B cell (primary cell): ENCODE measurements at regions of chr6 and their contacts with region 1.

Region 1: DNA sequence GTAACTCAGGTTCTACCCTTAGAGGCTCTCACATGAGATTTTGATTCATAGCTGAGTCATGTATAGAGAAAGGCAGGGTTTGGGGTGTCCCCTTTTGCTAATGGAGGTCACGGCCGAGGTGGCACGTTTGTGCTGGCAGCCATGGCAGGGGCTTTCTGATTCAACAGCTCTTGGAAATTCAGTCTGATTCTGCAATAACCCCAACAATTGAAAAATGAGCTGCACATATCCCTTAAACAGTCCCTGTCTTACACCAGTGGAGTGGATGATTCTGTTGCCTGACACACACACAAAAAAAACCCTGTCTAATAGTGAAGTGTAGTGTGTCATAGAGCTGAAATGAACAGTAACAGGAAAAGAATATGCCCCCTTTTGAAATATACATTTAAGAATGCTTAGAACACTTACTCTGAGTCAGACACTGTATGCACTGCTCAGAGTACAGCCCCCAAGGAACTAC is 40.4 kb upstream of the ARG1 start:
- DNase-seq: no peak
- ATAC-seq: no peak
- H3K4me3 ChIP-seq: no peak overlapping the region
- H3K4me3 Mint-ChIP-seq: no peak overlapping the region
- H3K27ac ChIP-seq: no peak overlapping the region
- H3K27ac Mint-ChIP-seq: no peak overlapping the region
- H3K4me1 ChIP-seq: peaks cover 3% of the 10 kb centered on the region in 2 donors
- H3K4me1 Mint-ChIP-seq: peaks cover 5% of the 10 kb centered on the region
- H3K27me3 ChIP-seq: peaks cover 0 to 4% (median 0%) of the 10 kb centered on the region in 4 experiments
- H3K27me3 Mint-ChIP-seq: peaks cover 11% of the 10 kb centered on the region
- CTCF ChIP-seq: no peak

Region 2: GRCh38 chr6:131129689-131130545 is 402.7 kb before region 1 on chr6:
- CTCF ChIA-PET with region 1: no interaction called
- POLR2A ChIA-PET with region 1: no interaction called
- intact Hi-C with region 1: loop called (anchors 5 kb)
- DNase-seq: no peak
- ATAC-seq: no peak
- H3K4me3 ChIP-seq: no peak overlapping the region
- H3K4me3 Mint-ChIP-seq: no peak overlapping the region
- H3K27ac ChIP-seq: no peak overlapping the region
- H3K27ac Mint-ChIP-seq: no peak overlapping the region
- H3K4me1 ChIP-seq: peaks cover 4 to 5% of the 10 kb centered on the region in 2 donors
- H3K4me1 Mint-ChIP-seq: peaks cover 3% of the 10 kb centered on the region
- H3K27me3 ChIP-seq: no peaks in the 10 kb centered on the region
- H3K27me3 Mint-ChIP-seq: peaks cover 8% of the 10 kb centered on the region
- CTCF ChIP-seq: no peak

Region 3: DNA sequence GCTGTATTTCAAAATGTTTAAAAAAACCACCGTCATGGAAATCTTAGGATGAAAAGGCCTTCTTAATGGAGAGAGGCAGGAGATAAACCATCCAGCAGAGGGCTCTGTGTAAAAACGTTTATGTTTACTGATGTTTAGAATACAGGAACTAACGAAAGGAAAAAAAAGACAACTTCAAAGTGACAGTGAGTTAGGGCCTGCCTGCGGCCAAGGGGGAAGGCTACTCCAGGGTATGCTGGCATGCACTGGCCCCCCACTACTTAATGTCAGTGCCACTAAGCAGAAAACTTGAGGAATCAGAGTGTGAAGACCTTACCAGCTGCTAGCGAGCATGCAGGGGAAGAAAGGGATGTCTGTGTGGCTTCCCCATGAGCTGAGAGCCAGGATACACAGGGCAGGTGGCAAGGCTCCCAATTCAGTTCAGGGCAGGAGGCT is 349.6 kb before region 1 on chr6:
- CTCF ChIA-PET with region 1: interaction called, 66 read pairs
- POLR2A ChIA-PET with region 1: no interaction called
- intact Hi-C with region 1: loop called (anchors 1 kb)
- DNase-seq: peak; percentile 56
- ATAC-seq: peak; percentile 36
- H3K4me3 ChIP-seq: peak overlapping the region in 2 of 5 experiments; percentile 28 to 41
- H3K4me3 Mint-ChIP-seq: peak overlapping the region; percentile 33
- H3K27ac ChIP-seq: no peak overlapping the region
- H3K27ac Mint-ChIP-seq: peak overlapping the region; percentile 71
- H3K4me1 ChIP-seq: peaks cover 4 to 5% of the 10 kb centered on the region in 2 donors
- H3K4me1 Mint-ChIP-seq: peaks cover 5% of the 10 kb centered on the region
- H3K27me3 ChIP-seq: no peaks in the 10 kb centered on the region
- H3K27me3 Mint-ChIP-seq: no peaks in the 10 kb centered on the region
- CTCF ChIP-seq: peak; percentile 52

Region 4: DNA sequence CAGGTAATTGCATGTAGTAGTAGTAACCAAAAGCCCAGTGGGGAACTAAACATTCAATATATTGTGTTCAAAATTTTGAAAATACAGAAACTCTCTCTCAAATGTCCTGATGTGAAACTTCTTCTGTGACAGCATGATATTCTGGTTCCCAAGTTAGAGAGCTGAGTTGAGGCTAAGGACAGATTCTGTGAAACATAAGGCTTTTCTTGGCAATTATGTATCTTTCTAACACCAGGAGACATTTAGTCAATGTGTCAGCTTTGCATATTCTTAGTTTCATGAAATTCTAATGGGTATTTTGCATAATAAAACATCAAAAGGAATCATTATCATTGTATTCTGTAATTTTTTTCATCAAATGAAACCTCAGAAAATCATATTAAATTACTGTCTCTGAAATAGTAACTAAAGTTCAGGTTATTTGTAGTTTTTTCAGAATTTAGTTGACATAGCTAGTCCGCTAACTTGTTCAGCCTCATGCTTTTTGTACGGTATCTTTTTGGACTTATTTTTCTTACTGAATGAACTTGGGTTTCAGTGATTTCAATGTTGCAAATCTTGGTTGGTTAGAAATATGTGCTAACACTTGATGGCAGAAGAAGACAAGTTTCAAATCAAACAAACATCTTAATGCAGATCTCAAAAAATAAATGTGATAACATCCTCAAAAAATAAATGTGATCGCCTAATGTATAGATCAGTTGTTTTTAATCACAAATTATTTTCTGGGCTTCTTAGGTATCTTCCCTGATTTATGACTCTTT is 326.9 kb before region 1 on chr6:
- CTCF ChIA-PET with region 1: interaction called, 86 read pairs
- POLR2A ChIA-PET with region 1: no interaction called
- intact Hi-C with region 1: no loop called
- DNase-seq: no peak
- ATAC-seq: no peak
- H3K4me3 ChIP-seq: no peak overlapping the region
- H3K4me3 Mint-ChIP-seq: no peak overlapping the region
- H3K27ac ChIP-seq: no peak overlapping the region
- H3K27ac Mint-ChIP-seq: no peak overlapping the region
- H3K4me1 ChIP-seq: peaks cover 0 to 8% of the 10 kb centered on the region in 2 donors
- H3K4me1 Mint-ChIP-seq: peaks cover 12% of the 10 kb centered on the region
- H3K27me3 ChIP-seq: no peaks in the 10 kb centered on the region
- H3K27me3 Mint-ChIP-seq: no peaks in the 10 kb centered on the region
- CTCF ChIP-seq: no peak

Region 5: DNA sequence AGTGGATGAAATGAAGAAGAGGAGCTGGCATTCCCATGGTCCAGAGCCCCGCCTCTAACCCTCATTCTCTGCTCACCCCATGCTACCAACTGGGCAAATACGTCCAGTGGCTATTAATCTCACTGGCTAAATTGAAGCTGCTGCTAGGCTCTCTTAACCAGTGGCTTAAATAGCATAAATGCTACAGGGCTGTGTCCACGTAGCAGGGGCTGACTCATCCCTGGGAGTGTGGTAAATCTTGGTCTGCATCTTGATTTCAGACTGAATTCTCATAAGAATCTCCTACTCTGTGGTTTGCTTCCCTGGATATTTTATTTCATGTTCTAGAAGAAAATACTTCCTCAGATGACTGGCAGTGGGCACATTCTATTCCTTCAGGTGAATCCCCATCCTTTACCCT is 152.7 kb before region 1 on chr6:
- CTCF ChIA-PET with region 1: no interaction called
- POLR2A ChIA-PET with region 1: no interaction called
- intact Hi-C with region 1: no loop called
- DNase-seq: no peak
- ATAC-seq: no peak
- H3K4me3 ChIP-seq: no peak overlapping the region
- H3K4me3 Mint-ChIP-seq: no peak overlapping the region
- H3K27ac ChIP-seq: no peak overlapping the region
- H3K27ac Mint-ChIP-seq: no peak overlapping the region
- H3K4me1 ChIP-seq: peaks cover 15 to 17% of the 10 kb centered on the region in 2 donors
- H3K4me1 Mint-ChIP-seq: peaks cover 18% of the 10 kb centered on the region
- H3K27me3 ChIP-seq: no peaks in the 10 kb centered on the region
- H3K27me3 Mint-ChIP-seq: peaks cover 6% of the 10 kb centered on the region
- CTCF ChIP-seq: no peak

Region 6: DNA sequence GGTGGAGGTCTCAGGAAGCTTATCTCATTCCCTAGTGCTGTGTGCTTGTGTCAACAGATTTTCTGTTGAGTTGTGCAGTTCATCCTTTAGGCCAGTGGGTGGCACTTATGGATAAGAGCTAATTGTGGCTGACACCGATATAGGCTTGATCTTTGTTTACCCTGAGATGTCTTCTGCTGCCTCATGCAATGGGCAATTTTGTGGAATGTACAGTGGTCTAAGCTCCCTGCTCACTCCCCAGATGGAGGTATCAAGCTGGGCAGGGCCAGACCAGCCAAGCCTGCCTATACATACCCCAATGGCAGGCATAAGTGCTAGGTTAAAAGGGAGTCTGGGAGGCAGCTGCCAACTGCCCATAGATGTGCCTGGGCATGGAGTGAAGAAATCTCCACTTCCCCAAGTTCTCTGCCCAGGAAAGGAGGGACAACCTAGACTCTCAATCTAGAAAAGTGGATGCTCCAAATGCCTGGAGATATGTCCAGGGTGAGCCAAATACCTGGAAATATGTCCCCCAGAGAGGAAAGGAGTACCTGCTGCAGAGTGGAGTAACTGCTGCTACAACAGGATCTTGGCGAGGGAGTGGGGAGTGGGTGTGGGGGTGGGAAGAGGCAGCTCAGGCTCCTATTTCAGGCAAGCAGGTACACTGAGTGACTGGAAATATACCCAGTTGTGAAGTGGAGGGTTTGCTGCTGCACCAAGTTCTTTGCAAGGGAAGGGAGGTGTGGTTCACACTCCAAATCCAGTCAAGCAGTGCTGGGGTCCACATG is 12.8 kb before region 1 on chr6:
- CTCF ChIA-PET with region 1: interaction called, 10 read pairs
- POLR2A ChIA-PET with region 1: no interaction called
- intact Hi-C with region 1: no loop called
- DNase-seq: peak; percentile 38
- ATAC-seq: peak; percentile 57
- H3K4me3 ChIP-seq: no peak overlapping the region
- H3K4me3 Mint-ChIP-seq: no peak overlapping the region
- H3K27ac ChIP-seq: no peak overlapping the region
- H3K27ac Mint-ChIP-seq: no peak overlapping the region
- H3K4me1 ChIP-seq: no peaks in the 10 kb centered on the region
- H3K4me1 Mint-ChIP-seq: no peaks in the 10 kb centered on the region
- H3K27me3 ChIP-seq: peaks cover 0 to 3% (median 1%) of the 10 kb centered on the region in 4 experiments
- H3K27me3 Mint-ChIP-seq: peaks cover 14% of the 10 kb centered on the region
- CTCF ChIP-seq: peak; percentile 64